GM10248 (cell line): ENCODE measurements at regions of chr16 and their contacts with region 1.

Region 1: GRCh38 chr16:67641779-67642708 is 2.9 kb upstream of the CARMIL2 start:
- DNase-seq: no peak
- CTCF ChIP-seq: no peak

Region 2: GRCh38 chr16:67050796-67051195 is 591.2 kb before region 1 on chr16:
- CTCF ChIA-PET with region 1: no interaction called
- POLR2A ChIA-PET with region 1: no interaction called
- DNase-seq: no peak
- CTCF ChIP-seq: no peak

Region 3: DNA sequence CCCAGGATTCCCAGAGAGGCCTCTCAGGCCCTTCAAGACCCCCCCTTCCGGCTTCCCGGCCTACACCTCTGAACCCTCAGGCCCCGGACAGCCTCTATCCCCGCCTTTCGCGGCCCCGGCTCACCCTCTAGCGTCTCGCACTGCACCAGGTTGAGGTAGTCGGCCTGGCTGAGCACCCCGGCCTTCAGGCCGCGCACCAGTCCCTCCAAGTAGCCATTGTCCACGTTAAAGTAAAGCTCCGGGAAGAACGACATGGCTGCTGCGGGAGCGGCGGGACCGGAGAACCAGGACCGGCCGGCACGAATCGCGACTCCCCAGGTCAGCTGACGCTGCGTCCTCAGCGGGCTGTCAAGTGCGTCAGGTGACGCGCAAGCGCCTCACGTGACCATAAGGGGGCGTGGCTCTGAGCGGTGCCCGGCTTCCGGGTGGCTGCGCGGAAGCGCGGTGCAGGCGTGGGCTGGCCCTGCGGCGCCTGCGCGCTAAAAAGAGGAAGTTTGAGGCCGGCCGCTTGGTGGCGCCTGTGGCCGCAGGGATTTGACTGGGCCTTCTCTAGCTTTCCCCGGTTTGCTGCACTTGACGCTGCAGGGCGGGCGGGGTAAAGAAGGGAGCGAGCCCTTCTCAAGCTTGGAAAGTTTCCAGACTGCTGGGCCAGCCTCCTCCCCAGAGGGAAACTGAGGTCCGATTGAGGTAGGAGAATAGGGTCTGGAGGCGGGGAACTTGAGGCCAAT is 161.0 kb before region 1 on chr16 and contains the start of gene ATP6V0D1:
- CTCF ChIA-PET with region 1: interaction called, 11 read pairs
- POLR2A ChIA-PET with region 1: no interaction called
- DNase-seq: peak; percentile 99
- CTCF ChIP-seq: peak; percentile 90

Region 4: GRCh38 chr16:67530013-67530939 is 111.8 kb before region 1 on chr16:
- CTCF ChIA-PET with region 1: interaction called, 14 read pairs
- POLR2A ChIA-PET with region 1: no interaction called
- DNase-seq: peak; percentile 67
- CTCF ChIP-seq: no peak

Region 5: DNA sequence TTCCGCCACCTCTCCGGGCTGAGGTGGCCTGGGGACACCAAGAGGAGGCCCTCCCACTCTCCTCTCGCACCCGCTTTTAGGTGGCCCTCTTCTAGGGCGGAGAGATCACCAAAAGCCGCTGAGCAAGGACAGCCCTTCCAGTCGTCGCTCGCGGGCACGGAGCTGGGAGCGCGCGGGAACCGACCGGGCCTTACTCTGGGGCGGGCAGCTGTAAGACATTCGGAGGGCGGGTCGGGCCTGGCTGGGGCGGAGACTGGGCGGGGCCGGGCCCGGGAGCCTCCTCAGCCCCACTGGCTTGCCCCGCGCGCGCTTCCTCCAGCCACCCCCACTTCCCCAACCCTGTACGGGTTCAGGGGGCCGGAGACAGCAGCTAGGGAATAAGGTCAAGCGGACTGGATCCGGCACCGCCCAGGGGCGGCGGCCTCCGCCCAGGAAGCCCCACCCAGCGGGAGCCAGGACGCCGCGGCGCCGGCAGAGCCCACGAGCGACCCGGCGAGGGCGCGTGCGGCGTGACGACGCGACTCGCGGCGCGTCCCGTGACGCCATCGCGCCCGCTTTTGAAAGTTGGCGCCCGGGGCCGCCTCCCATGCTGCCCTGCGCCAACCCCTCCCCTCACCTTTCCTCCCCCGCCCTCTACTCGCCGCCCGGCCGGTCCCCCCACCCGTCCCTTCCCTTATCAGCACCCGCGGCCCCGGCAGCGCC is 80.1 kb before region 1 on chr16:
- CTCF ChIA-PET with region 1: interaction called, 53 read pairs
- POLR2A ChIA-PET with region 1: no interaction called
- DNase-seq: peak; percentile 96
- CTCF ChIP-seq: no peak

Region 6: DNA sequence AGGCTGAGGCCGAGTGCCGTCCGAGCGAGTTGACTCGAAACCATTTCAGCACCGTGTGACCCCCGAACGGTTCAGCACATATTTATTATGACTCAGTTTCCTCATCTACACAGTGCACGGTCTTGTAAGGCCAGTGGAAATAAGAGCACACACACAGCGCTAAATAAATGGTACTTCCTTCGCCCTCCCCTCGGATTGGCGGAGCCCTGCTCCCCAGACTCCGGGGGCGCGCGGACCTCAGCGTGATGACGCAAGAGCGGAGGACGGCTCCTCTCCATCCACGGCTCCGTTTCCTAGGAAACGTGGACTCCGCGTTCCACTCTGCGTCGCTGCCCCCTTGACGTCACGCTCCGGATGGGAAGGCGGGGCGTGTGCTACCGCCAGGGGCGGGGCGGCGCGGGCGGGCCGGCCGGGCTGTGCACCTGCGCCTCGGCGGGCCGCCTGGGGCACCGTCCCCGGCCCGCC is 18.6 kb after region 1 on chr16 and contains the start of gene PARD6A:
- CTCF ChIA-PET with region 1: interaction called, 89 read pairs
- POLR2A ChIA-PET with region 1: no interaction called
- DNase-seq: peak; percentile 100
- CTCF ChIP-seq: no peak

Region 7: GRCh38 chr16:67685388-67686112 is 43.5 kb after region 1 on chr16:
- CTCF ChIA-PET with region 1: no interaction called
- POLR2A ChIA-PET with region 1: no interaction called
- DNase-seq: peak; percentile 37
- CTCF ChIP-seq: no peak

Region 8: GRCh38 chr16:67790071-67790470 is 148.0 kb after region 1 on chr16:
- CTCF ChIA-PET with region 1: no interaction called
- POLR2A ChIA-PET with region 1: no interaction called
- DNase-seq: no peak
- CTCF ChIP-seq: no peak